Endothelial cell of umbilical vein (primary cell): ENCODE measurements at regions of chr5 and their contacts with region 1.

Region 1: GRCh38 chr5:109604758-109605157 is 85.0 kb upstream of the MAN2A1 start:
- DNase-seq: no peak
- H3K4me3 ChIP-seq: no peak overlapping the region
- H3K27ac ChIP-seq: no peak overlapping the region
- H3K4me1 ChIP-seq: no peaks in the 10 kb centered on the region
- H3K27me3 ChIP-seq: no peaks in the 10 kb centered on the region
- CTCF ChIP-seq: no peak
- POLR2A ChIP-seq: no peak

Region 2: GRCh38 chr5:109125755-109126429 is 478.9 kb before region 1 on chr5:
- CTCF ChIA-PET with region 1: no interaction called
- POLR2A ChIA-PET with region 1: no interaction called
- dilution Hi-C with region 1: no loop called
- intact Hi-C with region 1: no loop called
- DNase-seq: no peak
- H3K4me3 ChIP-seq: no peak overlapping the region
- H3K27ac ChIP-seq: no peak overlapping the region
- H3K4me1 ChIP-seq: no peaks in the 10 kb centered on the region
- H3K27me3 ChIP-seq: no peaks in the 10 kb centered on the region
- CTCF ChIP-seq: no peak
- POLR2A ChIP-seq: no peak

Region 3: GRCh38 chr5:109619606-109620005 is 14.8 kb after region 1 on chr5:
- CTCF ChIA-PET with region 1: interaction called, 15 read pairs
- POLR2A ChIA-PET with region 1: no interaction called
- dilution Hi-C with region 1: no loop called
- intact Hi-C with region 1: no loop called
- DNase-seq: no peak
- H3K4me3 ChIP-seq: no peak overlapping the region
- H3K27ac ChIP-seq: no peak overlapping the region
- H3K4me1 ChIP-seq: no peaks in the 10 kb centered on the region
- H3K27me3 ChIP-seq: peaks cover 0 to 2% of the 10 kb centered on the region in 2 experiments
- CTCF ChIP-seq: no peak
- POLR2A ChIP-seq: no peak

Region 4: GRCh38 chr5:110932755-110933488 is 1328.2 kb after region 1 on chr5:
- CTCF ChIA-PET with region 1: no interaction called
- POLR2A ChIA-PET with region 1: no interaction called
- dilution Hi-C with region 1: no loop called
- intact Hi-C with region 1: no loop called
- DNase-seq: no peak
- H3K4me3 ChIP-seq: no peak overlapping the region
- H3K27ac ChIP-seq: no peak overlapping the region
- H3K4me1 ChIP-seq: no peaks in the 10 kb centered on the region
- H3K27me3 ChIP-seq: no peaks in the 10 kb centered on the region
- CTCF ChIP-seq: no peak
- POLR2A ChIP-seq: no peak